Activated naive CD4-positive, alpha-beta T cell treated with anti-CD3 and anti-CD28 coated beads for 36 hours (primary cell): ENCODE measurements at regions of chr3 and their contacts with region 1.

Region 1: DNA sequence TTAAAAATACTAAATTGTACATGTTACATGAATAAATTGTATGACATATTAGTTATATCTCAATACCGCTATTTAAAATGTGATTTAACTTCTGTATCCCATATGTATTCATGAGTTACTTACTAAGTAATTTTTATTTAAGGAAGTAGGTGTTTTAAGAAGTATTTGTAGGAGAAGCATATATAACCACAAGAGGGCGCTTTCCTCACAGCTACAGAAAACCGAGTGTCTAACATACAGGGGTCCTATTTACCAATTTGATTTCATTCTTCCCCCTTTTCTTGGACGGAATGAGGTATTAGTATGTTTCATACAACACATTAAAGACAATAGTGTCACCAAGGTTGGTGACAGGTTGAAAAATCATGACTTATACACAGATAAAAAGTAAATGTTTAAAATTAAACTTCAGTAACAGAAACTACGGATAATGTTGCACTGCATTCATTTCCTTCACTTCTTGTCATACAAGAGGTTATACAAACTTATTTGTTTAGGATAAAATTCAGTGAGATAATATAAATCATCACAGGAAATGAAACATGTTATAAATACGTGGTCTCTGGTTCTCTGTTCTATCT is 253.6 kb downstream of the MAGI1 start:
- DNase-seq: no peak
- H3K4me3 Mint-ChIP-seq: no peak overlapping the region
- H3K27ac Mint-ChIP-seq: no peak overlapping the region
- H3K4me1 Mint-ChIP-seq: no peaks in the 10 kb centered on the region
- H3K27me3 Mint-ChIP-seq: peaks cover 6% of the 10 kb centered on the region

Region 2: DNA sequence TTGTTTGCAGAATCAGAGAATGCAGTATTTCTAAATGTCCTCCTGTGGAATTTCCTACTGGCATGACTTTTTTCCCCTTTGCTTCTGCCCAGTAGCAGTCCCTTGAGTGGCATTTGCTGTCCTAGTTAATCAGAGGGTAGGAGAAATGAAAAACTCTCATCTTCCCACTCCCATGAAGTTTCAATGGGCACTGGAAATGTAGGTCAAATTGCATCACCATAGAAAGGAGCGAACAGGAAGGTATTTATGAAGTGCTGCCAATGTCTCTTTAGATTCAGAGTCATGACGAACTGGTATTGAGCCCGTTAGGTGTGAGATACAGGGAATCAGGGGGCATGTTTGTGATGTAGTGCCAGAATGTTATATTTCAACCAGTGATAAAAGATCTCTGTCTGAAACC is 1898.3 kb before region 1 on chr3:
- CTCF ChIA-PET with region 1: no interaction called
- intact Hi-C with region 1: no loop called
- DNase-seq: no peak
- H3K4me3 Mint-ChIP-seq: no peak overlapping the region
- H3K27ac Mint-ChIP-seq: no peak overlapping the region
- H3K4me1 Mint-ChIP-seq: peaks cover 19% of the 10 kb centered on the region
- H3K27me3 Mint-ChIP-seq: no peaks in the 10 kb centered on the region

Region 3: GRCh38 chr3:66138336-66139313 is 353.5 kb after region 1 on chr3:
- CTCF ChIA-PET with region 1: no interaction called
- intact Hi-C with region 1: loop called (anchors 1 kb)
- DNase-seq: peak; percentile 31
- H3K4me3 Mint-ChIP-seq: no peak overlapping the region
- H3K27ac Mint-ChIP-seq: peak overlapping the region; percentile 36
- H3K4me1 Mint-ChIP-seq: peaks cover 3% of the 10 kb centered on the region
- H3K27me3 Mint-ChIP-seq: peaks cover 7% of the 10 kb centered on the region

Region 4: GRCh38 chr3:66196633-66197032 is 411.5 kb after region 1 on chr3:
- CTCF ChIA-PET with region 1: no interaction called
- intact Hi-C with region 1: loop called (anchors 1 kb)
- DNase-seq: no peak
- H3K4me3 Mint-ChIP-seq: no peak overlapping the region
- H3K27ac Mint-ChIP-seq: no peak overlapping the region
- H3K4me1 Mint-ChIP-seq: peaks cover 3% of the 10 kb centered on the region
- H3K27me3 Mint-ChIP-seq: peaks cover 23% of the 10 kb centered on the region